ENCODE measurements at regions of chr4 and their contacts with region 1.

Region 1: GRCh38 chr4:40856277-40856821 is 106.6 kb downstream of the NSUN7 start:
- DNase-seq: no peak
- ATAC-seq: no peak
- H3K4me3 Mint-ChIP-seq: peak overlapping the region; percentile 61
- H3K27ac Mint-ChIP-seq: no peak overlapping the region
- H3K4me1 Mint-ChIP-seq: no peaks in the 10 kb centered on the region
- H3K27me3 Mint-ChIP-seq: peaks cover 53% of the 10 kb centered on the region
- CTCF ChIP-seq: no peak

Region 2: GRCh38 chr4:40878548-40879055 is 22.3 kb after region 1 on chr4:
- CTCF ChIA-PET with region 1: no interaction called
- POLR2A ChIA-PET with region 1: no interaction called
- intact Hi-C with region 1: loop called (anchors 1 kb)
- DNase-seq: no peak
- ATAC-seq: no peak
- H3K4me3 Mint-ChIP-seq: no peak overlapping the region
- H3K27ac Mint-ChIP-seq: no peak overlapping the region
- H3K4me1 Mint-ChIP-seq: no peaks in the 10 kb centered on the region
- H3K27me3 Mint-ChIP-seq: peaks cover 8% of the 10 kb centered on the region
- CTCF ChIP-seq: no peak